ENCODE measurements at regions of chr11 and their contacts with region 1.

Region 1: GRCh38 chr11:102416976-102417375 is 35.6 kb downstream of the TMEM123 start:
- DNase-seq: no peak
- H3K4me3 Mint-ChIP-seq: no peak overlapping the region
- H3K27ac Mint-ChIP-seq: peak overlapping the region; percentile 26
- H3K4me1 Mint-ChIP-seq: peaks cover 72% of the 10 kb centered on the region
- H3K27me3 Mint-ChIP-seq: no peaks in the 10 kb centered on the region

Region 2: DNA sequence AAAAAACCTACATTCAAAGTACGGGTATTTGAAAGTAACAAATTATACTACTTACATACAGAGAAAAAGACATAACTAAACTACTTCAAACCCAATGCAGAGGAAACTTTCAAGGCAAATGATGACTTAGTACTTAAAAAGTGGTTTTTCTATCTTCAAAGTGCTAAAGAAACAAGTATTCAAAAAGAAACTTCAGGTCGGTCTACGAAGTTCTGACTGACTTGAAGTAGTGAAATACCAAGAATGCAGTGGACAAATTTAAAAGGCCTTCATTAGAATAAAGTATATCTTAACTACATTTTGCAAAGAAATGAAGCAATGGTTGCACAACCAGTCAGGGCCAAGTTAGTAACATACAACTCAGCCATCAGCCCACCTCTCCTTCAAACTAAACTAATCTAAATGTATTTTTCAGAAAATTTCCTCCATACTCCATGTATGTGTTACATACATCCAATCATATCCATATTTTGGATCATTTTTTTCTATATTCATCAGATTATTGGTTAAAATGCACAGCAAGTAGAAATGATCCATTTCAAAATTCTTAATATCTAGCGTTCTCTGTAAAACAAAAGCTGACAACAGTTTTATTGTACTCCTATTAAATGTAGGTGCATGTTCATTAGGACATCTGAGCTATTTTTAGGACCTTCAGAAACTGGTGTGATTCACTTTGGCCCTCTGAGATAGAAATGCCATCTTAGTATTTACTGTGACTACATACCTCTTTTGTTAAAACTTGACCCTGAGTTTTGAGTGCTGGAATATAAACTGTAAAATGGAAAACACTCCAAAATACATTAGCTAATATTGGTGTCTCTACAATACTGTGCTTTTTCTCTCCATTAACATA is 20.0 kb before region 1 on chr11:
- intact Hi-C with region 1: loop called (anchors 1 kb)
- DNase-seq: no peak
- H3K4me3 Mint-ChIP-seq: no peak overlapping the region
- H3K27ac Mint-ChIP-seq: peak overlapping the region; percentile 53
- H3K4me1 Mint-ChIP-seq: peaks cover 19% of the 10 kb centered on the region
- H3K27me3 Mint-ChIP-seq: no peaks in the 10 kb centered on the region

Region 3: GRCh38 chr11:102430158-102430836 is 13.3 kb after region 1 on chr11:
- intact Hi-C with region 1: loop called (anchors 1 kb)
- DNase-seq: no peak
- H3K4me3 Mint-ChIP-seq: no peak overlapping the region
- H3K27ac Mint-ChIP-seq: peak overlapping the region; percentile 71
- H3K4me1 Mint-ChIP-seq: peaks cover 39% of the 10 kb centered on the region
- H3K27me3 Mint-ChIP-seq: no peaks in the 10 kb centered on the region

Region 4: GRCh38 chr11:102476812-102477211 is 59.8 kb after region 1 on chr11:
- intact Hi-C with region 1: no loop called
- DNase-seq: no peak
- H3K4me3 Mint-ChIP-seq: peak overlapping the region; percentile 19
- H3K27ac Mint-ChIP-seq: peak overlapping the region; percentile 88
- H3K4me1 Mint-ChIP-seq: peaks cover 55% of the 10 kb centered on the region
- H3K27me3 Mint-ChIP-seq: no peaks in the 10 kb centered on the region

Region 5: DNA sequence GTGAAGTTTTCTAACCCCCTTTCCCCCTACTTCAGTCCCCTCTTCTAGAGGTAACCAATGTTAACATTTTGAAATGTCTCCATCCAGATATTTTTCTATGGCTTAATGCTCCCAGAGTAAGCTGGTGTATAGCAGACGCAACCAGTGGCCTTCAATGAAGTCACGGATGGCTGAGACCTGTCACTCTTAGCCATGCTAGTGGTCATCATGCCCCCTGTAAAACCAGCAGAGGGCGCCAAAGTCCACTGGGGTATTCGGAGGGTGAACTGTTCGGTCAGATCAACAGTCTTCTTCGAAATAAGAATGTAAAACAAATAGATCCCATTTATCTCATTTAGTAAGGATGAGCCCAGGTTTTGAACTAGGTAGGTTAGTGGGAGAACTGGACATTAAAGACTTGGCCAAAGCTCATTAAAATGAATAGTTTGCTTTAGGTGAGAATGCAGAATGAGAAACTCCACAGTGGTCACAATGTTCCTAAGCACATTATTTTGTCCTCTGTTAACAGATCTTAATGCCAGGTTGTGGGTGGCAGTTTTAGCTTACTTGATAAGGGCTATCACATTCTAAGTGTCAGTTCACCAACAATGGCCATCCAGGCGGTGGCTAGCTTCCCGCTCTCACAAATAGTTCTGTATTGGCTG is 316.4 kb after region 1 on chr11:
- intact Hi-C with region 1: no loop called
- DNase-seq: peak; percentile 24
- H3K4me3 Mint-ChIP-seq: no peak overlapping the region
- H3K27ac Mint-ChIP-seq: no peak overlapping the region
- H3K4me1 Mint-ChIP-seq: no peaks in the 10 kb centered on the region
- H3K27me3 Mint-ChIP-seq: peaks cover 3% of the 10 kb centered on the region

Measured in activated T-helper 2 cell treated with anti-CD3 and anti-CD28 coated beads, Interferon-gamma antibody, Interleukin-2, Interleukin-4, amounts not matched to agents 10 μg/mL and 5 μg/mL and 100 μg/mL, durations not matched to agents 14 hours and 24 hours and 36 hours (primary cell).